ENCODE measurements at regions of chr11 and their contacts with region 1.

Region 1: DNA sequence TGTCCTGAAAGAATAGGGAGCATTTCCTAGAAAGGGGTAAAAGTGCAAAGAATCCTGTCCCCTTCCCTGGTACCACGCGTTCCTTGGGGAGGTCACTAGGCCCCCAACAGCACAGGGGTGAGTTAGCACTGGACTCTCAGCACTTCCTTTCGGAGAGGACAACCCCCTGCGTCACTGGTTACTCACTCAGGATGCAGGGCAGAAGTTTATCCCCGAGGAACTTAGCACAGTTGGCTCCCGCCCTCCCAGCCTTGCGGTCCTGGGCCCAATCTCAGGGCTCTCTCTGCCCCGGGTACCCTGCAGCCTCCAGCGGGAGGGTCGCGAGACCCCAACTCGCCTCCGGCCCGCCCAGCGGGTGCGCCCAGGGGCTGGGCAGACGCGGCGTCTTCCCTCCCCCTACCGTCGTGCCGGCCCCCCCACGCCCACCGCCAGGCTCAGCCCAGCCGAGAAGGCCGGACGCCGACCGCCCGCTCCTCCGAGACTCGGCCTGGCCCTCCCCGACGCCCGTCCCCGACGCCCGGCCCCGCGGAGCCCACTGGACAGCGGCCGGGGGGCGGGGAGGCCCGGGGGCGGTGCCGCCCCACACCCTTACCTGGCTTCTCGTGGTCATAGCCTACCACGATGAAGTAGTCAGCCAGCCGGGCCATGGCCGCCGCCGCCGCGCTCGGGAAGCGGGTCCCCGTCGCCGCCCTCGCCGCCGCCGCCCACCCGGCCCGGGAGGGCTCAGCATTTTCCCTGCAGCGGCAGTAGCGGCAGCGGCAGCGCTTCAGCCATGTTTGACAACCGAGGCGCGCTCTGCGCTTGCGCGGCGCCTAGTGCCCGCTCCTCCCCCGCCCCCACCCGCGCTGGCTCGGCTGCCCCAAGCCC is at the start of gene SBF2:
- DNase-seq: peak; percentile 72 to 79
- ATAC-seq: peak; percentile 89 to 91
- H3K4me3 ChIP-seq: peak within 1 kb of the TSS; percentile 73 to 98 (median 85)
- H3K27ac ChIP-seq: peak within 1 kb of the TSS; percentile 90 to 98 (median 92)
- H3K4me1 ChIP-seq: peaks cover 20 to 22% of the 10 kb centered on the region in 2 donors
- H3K27me3 ChIP-seq: no peaks in the 10 kb centered on the region
- CTCF ChIP-seq: peak in 1 of 5 experiments; percentile 13
- POLR2A ChIP-seq: peak; percentile 70 to 82
- total RNA-seq, gene SBF2: 19.3 to 28.1 (median 25.8) TPM

Region 2: GRCh38 chr11:9982800-9983579 is 310.7 kb before region 1 on chr11:
- in situ Hi-C with region 1: loop called in 1 of 4 experiments (anchors 25 kb)
- intact Hi-C with region 1: no loop called
- DNase-seq: no peak
- ATAC-seq: no peak
- H3K4me3 ChIP-seq: no peak overlapping the region
- H3K27ac ChIP-seq: no peak overlapping the region
- H3K4me1 ChIP-seq: no peaks in the 10 kb centered on the region
- H3K27me3 ChIP-seq: no peaks in the 10 kb centered on the region
- CTCF ChIP-seq: no peak
- POLR2A ChIP-seq: no peak

Region 3: DNA sequence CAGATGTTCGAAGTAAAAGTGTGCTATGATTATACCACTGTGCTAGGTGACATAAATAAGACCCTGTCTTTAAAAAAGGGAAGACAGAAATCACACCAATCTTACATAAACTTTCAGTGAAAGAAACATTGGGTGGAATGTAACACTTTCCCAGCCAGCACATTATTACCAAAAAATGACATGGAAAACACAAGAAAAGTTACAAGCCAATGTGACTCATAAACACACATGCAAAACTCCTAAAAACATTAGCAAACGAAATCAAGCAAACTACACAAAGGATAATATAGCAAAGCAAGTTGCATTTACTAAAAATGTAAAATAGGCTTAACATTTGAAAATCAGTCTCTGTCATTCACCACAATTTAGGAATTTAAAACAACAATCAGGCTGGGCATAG is 46.6 kb before region 1 on chr11:
- in situ Hi-C with region 1: no loop called
- intact Hi-C with region 1: no loop called
- DNase-seq: no peak
- ATAC-seq: no peak
- H3K4me3 ChIP-seq: no peak overlapping the region
- H3K27ac ChIP-seq: no peak overlapping the region
- H3K4me1 ChIP-seq: no peaks in the 10 kb centered on the region
- H3K27me3 ChIP-seq: no peaks in the 10 kb centered on the region
- CTCF ChIP-seq: no peak
- POLR2A ChIP-seq: no peak

Region 4: GRCh38 chr11:10366568-10367370 is 73.1 kb after region 1 on chr11:
- in situ Hi-C with region 1: no loop called
- intact Hi-C with region 1: no loop called
- DNase-seq: peak; percentile 72 to 84
- ATAC-seq: peak; percentile 93 to 94
- H3K4me3 ChIP-seq: peak overlapping the region in 1 of 4 donors; percentile 11
- H3K27ac ChIP-seq: peak overlapping the region; percentile 64 to 83 (median 69)
- H3K4me1 ChIP-seq: peaks cover 11 to 21% of the 10 kb centered on the region in 2 donors
- H3K27me3 ChIP-seq: no peaks in the 10 kb centered on the region
- CTCF ChIP-seq: peak; percentile 60 to 91 (median 83)
- POLR2A ChIP-seq: no peak

Measured in gastrocnemius medialis (tissue), 4 donors.